Transverse colon (tissue), 4 donors: ENCODE measurements at regions of chrX and their contacts with region 1.

Region 1: DNA sequence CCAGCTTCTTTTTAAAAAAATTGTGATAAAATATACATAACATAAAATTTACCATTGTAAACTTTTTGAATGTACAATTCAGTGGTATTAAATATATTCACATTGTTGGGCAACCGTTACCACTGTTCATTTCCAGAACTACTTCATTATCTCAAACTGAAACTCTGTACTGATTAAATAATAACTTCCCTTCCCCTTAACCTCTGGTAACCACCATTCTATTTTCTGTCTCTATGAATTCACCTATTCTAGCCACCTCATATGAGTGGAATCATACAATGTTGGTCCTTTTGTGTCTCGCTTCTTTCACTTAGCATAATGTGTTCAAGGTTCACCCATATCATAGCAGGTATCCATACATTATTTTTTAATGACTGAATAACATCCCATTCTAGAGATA is 8.3 kb downstream of the GPR50 start:
- DNase-seq: no peak
- H3K4me3 ChIP-seq: no peak overlapping the region
- H3K27ac ChIP-seq: no peak overlapping the region
- H3K4me1 ChIP-seq: no peaks in the 10 kb centered on the region
- H3K27me3 ChIP-seq: no peaks in the 10 kb centered on the region
- CTCF ChIP-seq: no peak
- EP300 ChIP-seq: no peak
- POLR2A ChIP-seq: no peak

Region 2: GRCh38 chrX:151206871-151207270 is 22.2 kb after region 1 on chrX:
- in situ Hi-C with region 1: no loop called
- intact Hi-C with region 1: loop called (anchors 1 kb)
- DNase-seq: no peak
- H3K4me3 ChIP-seq: no peak overlapping the region
- H3K27ac ChIP-seq: no peak overlapping the region
- H3K4me1 ChIP-seq: no peaks in the 10 kb centered on the region
- H3K27me3 ChIP-seq: no peaks in the 10 kb centered on the region
- CTCF ChIP-seq: no peak
- EP300 ChIP-seq: no peak
- POLR2A ChIP-seq: no peak

Region 3: GRCh38 chrX:151279161-151279560 is 94.5 kb after region 1 on chrX:
- in situ Hi-C with region 1: no loop called
- intact Hi-C with region 1: no loop called
- DNase-seq: no peak
- H3K4me3 ChIP-seq: no peak overlapping the region
- H3K27ac ChIP-seq: no peak overlapping the region
- H3K4me1 ChIP-seq: no peaks in the 10 kb centered on the region
- H3K27me3 ChIP-seq: no peaks in the 10 kb centered on the region
- CTCF ChIP-seq: no peak
- EP300 ChIP-seq: no peak
- POLR2A ChIP-seq: no peak

Region 4: DNA sequence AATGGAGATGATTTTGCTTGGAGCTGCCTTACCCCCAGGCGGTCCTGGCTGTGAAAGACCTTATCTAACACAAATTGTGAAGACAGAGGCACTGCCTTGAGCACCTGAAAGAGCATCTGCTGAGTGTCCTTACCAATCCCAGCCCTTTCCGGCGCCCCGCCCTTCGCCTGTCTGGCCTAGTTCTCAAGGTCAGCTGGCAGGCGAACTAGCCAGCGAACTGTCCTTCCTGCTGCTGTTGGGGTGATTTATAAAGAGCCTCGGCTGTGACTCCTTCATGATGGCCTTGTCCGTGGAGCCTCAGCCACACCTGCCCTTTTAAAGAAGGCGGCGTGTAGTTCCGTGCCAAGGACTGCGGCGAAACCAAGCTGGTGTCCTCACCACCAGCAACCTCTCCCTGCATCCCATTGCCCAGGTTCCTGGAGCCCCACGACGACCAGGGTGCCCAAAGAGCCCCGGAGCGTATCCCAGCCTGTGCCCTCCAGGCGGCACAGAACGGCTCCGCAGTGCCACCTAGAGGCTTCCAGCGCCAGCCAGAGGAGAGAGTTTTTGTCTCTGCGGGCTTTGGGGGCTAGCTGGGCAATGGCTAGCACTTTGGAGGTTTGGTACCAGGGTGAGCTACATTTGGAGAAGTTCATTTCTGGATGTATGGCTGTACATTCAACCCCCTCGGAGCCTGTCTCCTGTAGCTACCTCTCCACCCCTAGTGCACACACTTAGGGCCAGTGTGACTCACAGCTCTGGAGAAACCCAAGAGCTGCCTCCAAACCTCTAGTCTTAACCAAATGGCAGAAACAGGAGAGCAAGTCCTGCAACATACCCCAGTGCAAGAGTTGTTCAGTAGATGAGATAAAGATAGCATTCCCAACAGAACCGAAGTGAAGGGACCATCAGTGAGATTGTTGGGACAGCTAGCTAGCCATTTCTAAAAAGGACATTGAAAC is 175.5 kb after region 1 on chrX:
- in situ Hi-C with region 1: no loop called
- intact Hi-C with region 1: no loop called
- DNase-seq: no peak
- H3K4me3 ChIP-seq: no peak overlapping the region
- H3K27ac ChIP-seq: no peak overlapping the region
- H3K4me1 ChIP-seq: no peaks in the 10 kb centered on the region
- H3K27me3 ChIP-seq: no peaks in the 10 kb centered on the region
- CTCF ChIP-seq: peak in 4 of 5 experiments; percentile 15 to 52 (median 44)
- EP300 ChIP-seq: no peak
- POLR2A ChIP-seq: no peak

Region 5: DNA sequence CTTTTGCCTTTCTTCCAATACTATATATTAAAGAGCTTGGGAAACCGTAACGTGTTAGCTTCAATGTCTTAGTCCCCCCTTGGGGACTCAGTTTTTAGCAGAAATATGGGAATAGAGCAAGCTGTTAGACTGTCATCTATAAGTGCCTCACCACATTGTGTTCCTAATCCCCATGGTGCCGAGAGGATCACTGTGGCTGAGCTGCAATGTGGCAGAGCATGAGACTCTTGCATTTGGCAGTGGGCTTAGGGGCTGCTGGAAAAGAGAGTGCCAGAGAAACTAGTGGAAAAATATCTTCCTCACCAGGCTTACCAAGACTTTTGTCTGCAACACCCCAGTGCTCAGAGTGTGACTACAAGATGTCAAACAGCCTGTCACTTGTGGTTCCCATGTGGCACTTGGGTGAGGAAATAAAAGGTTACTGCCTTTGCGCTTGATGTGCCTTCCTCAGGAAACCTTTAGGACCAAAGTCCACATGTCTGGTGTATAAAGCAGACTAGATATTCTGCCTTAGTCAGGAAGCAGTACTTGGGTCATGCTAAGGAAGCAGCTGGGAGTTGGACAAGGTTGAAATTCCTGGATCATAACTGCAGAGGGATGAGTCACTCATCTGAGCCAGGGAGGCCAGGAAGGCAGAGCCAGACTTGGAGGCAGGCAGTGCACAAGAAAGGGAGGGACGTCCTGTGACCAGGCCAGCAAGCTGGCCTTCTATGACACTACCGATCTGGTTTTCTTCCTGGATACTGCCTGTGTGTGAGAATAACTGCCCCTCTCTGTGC is 718.3 kb after region 1 on chrX:
- in situ Hi-C with region 1: no loop called
- intact Hi-C with region 1: no loop called
- DNase-seq: peak; percentile 28
- H3K4me3 ChIP-seq: no peak overlapping the region
- H3K27ac ChIP-seq: peak overlapping the region in 2 of 4 donors; percentile 43 to 47
- H3K4me1 ChIP-seq: no peaks in the 10 kb centered on the region
- H3K27me3 ChIP-seq: no peaks in the 10 kb centered on the region
- CTCF ChIP-seq: no peak
- EP300 ChIP-seq: no peak
- POLR2A ChIP-seq: no peak